ENCODE measurements at regions of chr2 and their contacts with region 1.

Region 1: GRCh38 chr2:85728883-85729824 is 24.6 kb upstream of the ATOH8 start:
- DNase-seq: peak; percentile 83
- H3K4me3 ChIP-seq: no peak overlapping the region
- H3K27ac ChIP-seq: no peak overlapping the region
- H3K4me1 ChIP-seq: no peaks in the 10 kb centered on the region
- H3K27me3 ChIP-seq: no peaks in the 10 kb centered on the region
- CTCF ChIP-seq: peak; percentile 89 to 96 (median 94)
- POLR2A ChIP-seq: no peak

Region 2: GRCh38 chr2:85813982-85814801 is 85.0 kb after region 1 on chr2:
- intact Hi-C with region 1: loop called (anchors 2 kb)
- DNase-seq: peak; percentile 93
- H3K4me3 ChIP-seq: no peak overlapping the region
- H3K27ac ChIP-seq: no peak overlapping the region
- H3K4me1 ChIP-seq: peaks cover 15% of the 10 kb centered on the region
- H3K27me3 ChIP-seq: no peaks in the 10 kb centered on the region
- CTCF ChIP-seq: peak; percentile 94 to 98 (median 97)
- POLR2A ChIP-seq: no peak

Region 3: GRCh38 chr2:85838181-85838580 is 109.0 kb after region 1 on chr2:
- intact Hi-C with region 1: no loop called
- DNase-seq: no peak
- H3K4me3 ChIP-seq: no peak overlapping the region
- H3K27ac ChIP-seq: no peak overlapping the region
- H3K4me1 ChIP-seq: no peaks in the 10 kb centered on the region
- H3K27me3 ChIP-seq: no peaks in the 10 kb centered on the region
- CTCF ChIP-seq: no peak
- POLR2A ChIP-seq: no peak

Region 4: GRCh38 chr2:85911814-85912692 is 182.9 kb after region 1 on chr2:
- intact Hi-C with region 1: no loop called
- DNase-seq: no peak
- H3K4me3 ChIP-seq: no peak overlapping the region
- H3K27ac ChIP-seq: no peak overlapping the region
- H3K4me1 ChIP-seq: no peaks in the 10 kb centered on the region
- H3K27me3 ChIP-seq: no peaks in the 10 kb centered on the region
- CTCF ChIP-seq: no peak
- POLR2A ChIP-seq: no peak

Measured in prostate gland (tissue), 2 donors.